ENCODE measurements at regions of chr4 and their contacts with region 1.

Region 1: GRCh38 chr4:10403633-10404445 is 53.4 kb downstream of the ZNF518B start:
- DNase-seq: peak; percentile 17
- ATAC-seq: no peak
- H3K4me3 Mint-ChIP-seq: no peak overlapping the region
- H3K27ac Mint-ChIP-seq: no peak overlapping the region
- H3K4me1 Mint-ChIP-seq: no peaks in the 10 kb centered on the region
- H3K27me3 Mint-ChIP-seq: no peaks in the 10 kb centered on the region
- CTCF ChIP-seq: peak; percentile 72

Region 2: DNA sequence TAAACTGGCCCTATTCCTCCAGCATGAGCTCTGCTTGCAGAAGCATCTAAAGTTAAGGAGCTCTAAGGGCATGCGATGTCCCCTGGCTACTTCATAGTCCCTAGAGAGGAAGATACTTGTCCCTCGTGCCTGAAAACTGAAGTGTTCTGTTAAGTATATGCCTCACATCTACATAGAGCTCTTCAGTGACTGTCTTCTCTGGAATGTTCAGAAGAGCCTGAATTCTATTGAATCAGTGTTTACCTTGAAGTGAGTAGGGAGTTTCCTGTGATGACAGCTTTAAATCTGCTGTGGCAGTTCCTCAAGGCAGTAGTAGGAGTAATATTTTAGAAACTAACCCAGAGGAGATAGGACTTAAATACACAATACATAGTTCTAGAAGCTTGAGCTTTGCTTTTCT is 57.8 kb before region 1 on chr4:
- CTCF ChIA-PET with region 1: no interaction called
- POLR2A ChIA-PET with region 1: no interaction called
- intact Hi-C with region 1: no loop called
- DNase-seq: no peak
- ATAC-seq: no peak
- H3K4me3 Mint-ChIP-seq: no peak overlapping the region
- H3K27ac Mint-ChIP-seq: no peak overlapping the region
- H3K4me1 Mint-ChIP-seq: no peaks in the 10 kb centered on the region
- H3K27me3 Mint-ChIP-seq: peaks cover 3% of the 10 kb centered on the region
- CTCF ChIP-seq: no peak

Region 3: DNA sequence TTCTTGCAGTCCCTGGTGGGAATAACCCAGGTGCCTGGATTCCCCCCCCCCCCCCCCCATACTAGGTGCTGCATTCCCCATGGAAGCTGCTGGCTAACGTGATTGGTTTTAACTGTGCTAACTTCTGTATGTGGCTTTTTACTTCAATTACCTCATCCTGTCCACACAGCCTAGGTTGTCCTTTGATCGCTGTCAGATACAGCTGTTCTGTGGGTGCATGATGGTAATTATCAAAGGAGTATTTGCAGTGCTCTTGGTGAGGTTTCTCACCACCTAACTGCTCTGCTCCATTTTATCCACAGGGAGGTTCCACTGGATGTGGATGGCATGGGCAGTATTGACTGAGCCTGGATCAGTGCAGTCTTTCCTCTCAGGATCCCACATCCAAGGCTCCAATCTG is 39.6 kb before region 1 on chr4:
- CTCF ChIA-PET with region 1: no interaction called
- POLR2A ChIA-PET with region 1: no interaction called
- intact Hi-C with region 1: no loop called
- DNase-seq: no peak
- ATAC-seq: no peak
- H3K4me3 Mint-ChIP-seq: no peak overlapping the region
- H3K27ac Mint-ChIP-seq: no peak overlapping the region
- H3K4me1 Mint-ChIP-seq: no peaks in the 10 kb centered on the region
- H3K27me3 Mint-ChIP-seq: peaks cover 3% of the 10 kb centered on the region
- CTCF ChIP-seq: no peak

Region 4: DNA sequence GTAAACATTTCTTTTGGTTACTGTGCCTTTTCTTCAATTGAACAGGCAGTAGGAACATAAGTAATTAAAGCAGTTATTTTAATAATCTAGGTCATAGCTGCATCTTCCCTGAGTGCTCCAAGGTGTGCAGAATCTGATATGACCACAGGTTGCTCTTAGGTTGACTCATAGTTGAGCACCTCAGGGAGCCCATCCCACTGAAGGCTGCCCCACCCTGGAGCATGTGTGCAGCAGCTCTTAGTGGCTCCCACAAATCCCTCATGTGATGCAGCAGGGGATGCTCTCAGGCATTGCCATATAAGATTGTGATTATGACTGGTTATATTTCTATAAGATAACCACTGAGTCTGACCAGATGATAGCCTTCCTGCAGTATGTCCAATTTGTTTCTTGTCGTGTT is 18.9 kb before region 1 on chr4:
- CTCF ChIA-PET with region 1: interaction called, 3 read pairs
- POLR2A ChIA-PET with region 1: no interaction called
- intact Hi-C with region 1: loop called (anchors 1 kb)
- DNase-seq: no peak
- ATAC-seq: no peak
- H3K4me3 Mint-ChIP-seq: no peak overlapping the region
- H3K27ac Mint-ChIP-seq: no peak overlapping the region
- H3K4me1 Mint-ChIP-seq: no peaks in the 10 kb centered on the region
- H3K27me3 Mint-ChIP-seq: no peaks in the 10 kb centered on the region
- CTCF ChIP-seq: no peak

Measured in activated CD8-positive, alpha-beta T cell treated with anti-CD3 and anti-CD28 coated beads for 36 hours (primary cell).